CD14-positive monocyte (primary cell): ENCODE measurements at regions of chr16 and their contacts with region 1.

Region 1: DNA sequence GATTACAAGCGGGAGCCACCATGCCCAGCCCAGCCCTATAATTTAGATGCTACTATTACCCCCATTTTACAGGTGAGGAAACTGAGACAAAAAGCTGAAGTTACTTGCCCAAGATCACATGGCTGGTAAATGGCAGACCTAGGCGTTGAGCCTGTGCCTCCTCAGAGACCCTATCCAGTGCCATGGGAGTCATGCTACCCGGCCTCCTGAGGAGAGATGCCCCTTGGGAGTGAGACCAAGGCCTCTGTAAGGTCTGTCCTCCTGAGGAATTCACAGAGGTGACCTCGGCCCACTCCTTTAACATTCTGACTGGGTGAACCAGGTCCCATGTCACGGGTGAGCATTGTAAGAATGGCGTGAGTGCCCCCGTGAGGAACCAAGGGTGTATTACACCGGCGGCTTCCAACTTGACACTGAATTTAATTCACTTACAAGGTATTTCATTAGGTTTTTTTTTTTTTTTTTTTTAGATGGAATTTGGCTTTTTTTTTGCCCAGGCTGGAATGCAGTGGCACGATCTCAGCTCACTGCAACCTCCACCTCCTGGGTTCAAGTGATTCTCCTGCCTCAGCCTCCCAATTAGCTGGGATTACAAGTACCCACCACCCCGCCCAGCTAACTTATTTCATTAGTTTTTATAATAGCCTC is 95.7 kb downstream of the ABCC6 start:
- DNase-seq: peak; percentile 44 to 62 (median 60)
- H3K4me3 ChIP-seq: no peak overlapping the region
- H3K4me3 Mint-ChIP-seq: no peak overlapping the region
- H3K27ac ChIP-seq: peak overlapping the region in 1 of 2 donors; percentile 20
- H3K27ac Mint-ChIP-seq: peak overlapping the region in 4 of 7 donors; percentile 9 to 60 (median 16)
- H3K4me1 ChIP-seq: no peaks in the 10 kb centered on the region
- H3K4me1 Mint-ChIP-seq: no peaks in the 10 kb centered on the region
- H3K27me3 ChIP-seq: no peaks in the 10 kb centered on the region
- H3K27me3 Mint-ChIP-seq: no peaks in the 10 kb centered on the region
- CTCF ChIP-seq: peak; percentile 88

Region 2: DNA sequence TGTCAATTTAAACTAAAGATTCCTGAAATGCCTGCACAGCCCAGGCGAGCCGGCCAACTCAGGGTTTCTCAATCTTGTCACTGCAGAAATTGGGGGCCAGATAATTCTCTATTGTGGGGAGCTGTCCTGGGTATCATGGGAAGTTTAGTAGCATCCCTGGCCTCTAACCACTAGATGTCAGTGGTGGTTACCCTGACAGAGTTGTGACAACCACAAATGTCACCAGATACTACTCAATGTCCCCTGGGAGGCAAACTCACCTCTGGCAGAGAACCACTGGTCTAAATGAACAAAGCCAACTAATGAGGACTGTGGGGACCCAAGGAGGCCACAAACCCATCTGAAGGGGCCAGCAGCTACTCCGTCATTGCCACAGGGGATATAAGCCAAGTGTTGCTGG is 361.7 kb before region 1 on chr16:
- intact Hi-C with region 1: loop called (anchors 5 kb)
- DNase-seq: peak in 2 of 3 donors; percentile 10 to 13
- H3K4me3 ChIP-seq: no peak overlapping the region
- H3K4me3 Mint-ChIP-seq: no peak overlapping the region
- H3K27ac ChIP-seq: no peak overlapping the region
- H3K27ac Mint-ChIP-seq: no peak overlapping the region
- H3K4me1 ChIP-seq: no peaks in the 10 kb centered on the region
- H3K4me1 Mint-ChIP-seq: no peaks in the 10 kb centered on the region
- H3K27me3 ChIP-seq: no peaks in the 10 kb centered on the region
- H3K27me3 Mint-ChIP-seq: peaks cover 0 to 1% (median 1%) of the 10 kb centered on the region in 3 donors
- CTCF ChIP-seq: peak; percentile 44

Region 3: GRCh38 chr16:15874745-15875314 is 252.8 kb before region 1 on chr16:
- intact Hi-C with region 1: loop called in 1 of 2 experiments (anchors 5 kb)
- DNase-seq: peak in 2 of 3 donors; percentile 12 to 16
- H3K4me3 ChIP-seq: no peak overlapping the region
- H3K4me3 Mint-ChIP-seq: peak overlapping the region in 1 of 2 donors; percentile 26
- H3K27ac ChIP-seq: no peak overlapping the region
- H3K27ac Mint-ChIP-seq: peak overlapping the region in 2 of 7 donors; percentile 8 to 57
- H3K4me1 ChIP-seq: peaks cover 7% of the 10 kb centered on the region in 2 donors
- H3K4me1 Mint-ChIP-seq: peaks cover 13% of the 10 kb centered on the region
- H3K27me3 ChIP-seq: no peaks in the 10 kb centered on the region
- H3K27me3 Mint-ChIP-seq: no peaks in the 10 kb centered on the region
- CTCF ChIP-seq: peak; percentile 63

Region 4: DNA sequence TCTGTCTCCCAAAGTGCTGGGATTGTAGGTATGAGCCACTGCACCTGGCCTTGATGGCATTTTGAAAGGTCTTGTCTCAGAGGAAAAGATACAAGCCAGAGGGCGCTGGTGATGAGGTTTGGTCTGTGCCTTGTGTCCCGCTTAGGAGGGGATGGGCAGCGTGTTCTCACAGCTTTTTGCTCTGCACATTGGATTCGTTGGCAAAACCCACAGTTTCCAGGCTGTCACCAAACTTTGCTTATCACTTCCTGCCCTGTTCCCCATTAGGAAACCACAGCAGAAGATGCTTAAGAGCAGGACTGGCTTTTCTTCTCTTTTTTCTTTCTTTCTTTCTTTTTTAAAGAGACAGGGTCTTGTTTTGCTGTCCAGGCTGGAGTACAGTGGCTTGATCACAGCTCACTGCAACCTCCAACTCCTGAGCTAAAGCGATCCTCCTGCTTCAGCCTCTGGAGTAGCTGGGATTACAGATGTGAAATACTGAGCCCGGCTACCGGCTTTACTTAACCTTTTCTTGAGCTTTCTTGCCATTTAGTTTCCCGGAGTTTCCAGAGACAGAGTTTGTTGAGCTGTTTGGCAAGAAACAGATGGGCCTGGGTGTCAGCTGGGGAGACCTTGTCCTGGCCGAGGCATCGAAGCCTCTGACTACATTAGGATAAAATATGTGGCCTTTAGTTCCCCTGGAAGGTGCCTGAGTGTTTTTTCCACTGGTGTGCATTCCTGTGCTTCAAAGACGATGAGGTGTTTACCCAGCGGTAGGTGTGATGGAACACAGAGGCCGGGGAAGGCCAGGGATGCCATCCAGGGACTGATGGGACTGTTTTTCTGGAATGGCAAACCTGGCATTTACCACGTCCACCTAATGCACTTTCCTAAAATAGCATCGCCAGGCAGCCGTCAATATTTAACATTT is 65.3 kb before region 1 on chr16:
- intact Hi-C with region 1: loop called in 1 of 2 experiments (anchors 5 kb)
- DNase-seq: peak in 1 of 3 donors; percentile 33
- H3K4me3 ChIP-seq: no peak overlapping the region
- H3K4me3 Mint-ChIP-seq: peak overlapping the region in 1 of 2 donors; percentile 55
- H3K27ac ChIP-seq: peak overlapping the region in 1 of 2 donors; percentile 9
- H3K27ac Mint-ChIP-seq: peak overlapping the region; percentile 28 to 70 (median 42)
- H3K4me1 ChIP-seq: peaks cover 18 to 19% of the 10 kb centered on the region in 2 donors
- H3K4me1 Mint-ChIP-seq: peaks cover 23% of the 10 kb centered on the region
- H3K27me3 ChIP-seq: no peaks in the 10 kb centered on the region
- H3K27me3 Mint-ChIP-seq: peaks cover 0 to 3% (median 0%) of the 10 kb centered on the region in 3 donors
- CTCF ChIP-seq: no peak